Activated CD4-positive, alpha-beta T cell treated with anti-CD3 and anti-CD28 coated beads, Interleukin-2, amount 10 ng/mL, durations not matched to agents 24 days and 14 days (primary cell): ENCODE measurements at regions of chr7 and their contacts with region 1.

Region 1: DNA sequence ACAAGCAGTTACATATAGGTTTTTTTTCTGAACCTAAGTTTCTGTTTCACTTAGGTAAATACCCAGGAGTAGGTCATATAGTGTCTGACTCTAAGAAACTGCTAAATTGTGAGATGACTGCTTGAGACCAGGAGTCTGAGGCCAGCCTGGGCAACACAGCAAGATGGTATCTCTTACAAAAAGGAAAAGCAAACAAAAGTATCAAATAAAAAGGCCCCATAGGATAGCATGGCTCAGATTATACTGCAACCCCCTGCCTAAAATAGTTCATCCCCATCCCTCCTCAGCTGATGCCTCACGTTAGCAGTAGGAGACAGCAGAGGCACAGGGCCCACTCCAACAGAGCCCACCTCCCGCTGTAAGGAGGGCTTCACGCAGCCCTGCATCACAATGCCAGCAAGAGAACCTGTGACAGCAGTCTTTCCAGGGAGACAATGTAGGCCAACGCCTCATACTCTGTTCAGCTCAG is 90.2 kb downstream of the SRPK2 start:
- DNase-seq: peak; percentile 76
- H3K4me3 Mint-ChIP-seq: peak overlapping the region; percentile 50
- H3K27ac Mint-ChIP-seq: peak overlapping the region; percentile 72
- H3K4me1 Mint-ChIP-seq: peaks cover 38% of the 10 kb centered on the region
- H3K27me3 Mint-ChIP-seq: no peaks in the 10 kb centered on the region

Region 2: GRCh38 chr7:104956753-104957450 is 341.6 kb before region 1 on chr7:
- intact Hi-C with region 1: loop called (anchors 2 kb)
- DNase-seq: peak; percentile 88
- H3K4me3 Mint-ChIP-seq: peak overlapping the region; percentile 72
- H3K27ac Mint-ChIP-seq: peak overlapping the region; percentile 100
- H3K4me1 Mint-ChIP-seq: peaks cover 50% of the 10 kb centered on the region
- H3K27me3 Mint-ChIP-seq: no peaks in the 10 kb centered on the region

Region 3: DNA sequence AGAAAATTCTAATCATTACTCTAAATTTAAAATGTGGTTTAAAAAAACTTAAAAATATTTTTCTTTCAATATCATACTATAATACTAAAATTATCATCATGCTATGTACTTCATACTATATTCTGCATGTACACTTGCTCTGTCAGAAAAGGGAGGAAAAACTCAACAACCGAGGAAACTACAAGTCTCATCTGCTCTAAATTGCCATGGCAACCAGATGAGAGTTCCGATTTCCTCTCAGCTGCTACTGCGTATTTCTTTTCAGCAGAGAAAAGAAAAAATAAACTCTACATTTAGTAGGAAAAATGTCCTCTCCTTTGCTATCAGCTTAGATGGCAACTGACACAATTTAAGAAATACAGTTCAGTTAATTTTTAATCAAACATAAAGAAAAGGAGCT is 88.6 kb before region 1 on chr7:
- intact Hi-C with region 1: loop called (anchors 5 kb)
- DNase-seq: peak; percentile 68
- H3K4me3 Mint-ChIP-seq: no peak overlapping the region
- H3K27ac Mint-ChIP-seq: no peak overlapping the region
- H3K4me1 Mint-ChIP-seq: peaks cover 49% of the 10 kb centered on the region
- H3K27me3 Mint-ChIP-seq: no peaks in the 10 kb centered on the region

Region 4: DNA sequence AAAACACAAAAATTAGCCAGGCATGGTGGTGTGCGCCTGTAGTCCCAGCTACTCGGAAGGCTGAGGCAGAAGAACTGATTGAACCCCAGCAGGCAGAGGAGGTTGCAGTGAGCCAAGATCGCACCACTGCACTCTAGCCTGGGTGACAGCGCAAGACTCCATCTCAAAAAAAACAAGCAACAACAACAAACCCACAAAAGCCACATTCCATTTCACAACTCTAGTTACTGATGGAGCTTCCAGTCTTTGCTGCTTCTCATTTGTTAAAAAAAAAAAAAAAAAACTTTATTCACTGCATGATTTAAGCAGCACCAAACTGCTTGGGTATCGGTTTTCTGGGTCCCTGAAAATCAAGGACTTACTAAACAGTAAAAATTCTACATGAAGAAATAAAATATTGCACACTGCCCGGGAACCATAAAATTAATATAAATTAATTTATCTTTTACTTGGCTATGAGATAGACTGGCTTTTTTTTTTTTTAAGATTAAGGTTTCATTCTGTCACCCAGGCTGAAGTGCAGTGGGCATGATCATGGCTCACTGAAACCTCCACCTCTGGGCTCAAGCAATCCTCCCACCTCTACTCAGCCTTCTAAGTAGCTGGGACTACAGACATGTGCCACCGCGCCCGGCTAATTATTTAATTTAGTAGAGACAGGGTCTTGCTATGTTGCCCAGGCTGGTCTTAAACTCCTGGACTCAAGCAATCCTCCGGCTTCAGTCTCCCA is 48.3 kb after region 1 on chr7:
- intact Hi-C with region 1: loop called (anchors 1 kb)
- DNase-seq: peak; percentile 81
- H3K4me3 Mint-ChIP-seq: peak overlapping the region; percentile 56
- H3K27ac Mint-ChIP-seq: peak overlapping the region; percentile 60
- H3K4me1 Mint-ChIP-seq: peaks cover 42% of the 10 kb centered on the region
- H3K27me3 Mint-ChIP-seq: no peaks in the 10 kb centered on the region

Region 5: DNA sequence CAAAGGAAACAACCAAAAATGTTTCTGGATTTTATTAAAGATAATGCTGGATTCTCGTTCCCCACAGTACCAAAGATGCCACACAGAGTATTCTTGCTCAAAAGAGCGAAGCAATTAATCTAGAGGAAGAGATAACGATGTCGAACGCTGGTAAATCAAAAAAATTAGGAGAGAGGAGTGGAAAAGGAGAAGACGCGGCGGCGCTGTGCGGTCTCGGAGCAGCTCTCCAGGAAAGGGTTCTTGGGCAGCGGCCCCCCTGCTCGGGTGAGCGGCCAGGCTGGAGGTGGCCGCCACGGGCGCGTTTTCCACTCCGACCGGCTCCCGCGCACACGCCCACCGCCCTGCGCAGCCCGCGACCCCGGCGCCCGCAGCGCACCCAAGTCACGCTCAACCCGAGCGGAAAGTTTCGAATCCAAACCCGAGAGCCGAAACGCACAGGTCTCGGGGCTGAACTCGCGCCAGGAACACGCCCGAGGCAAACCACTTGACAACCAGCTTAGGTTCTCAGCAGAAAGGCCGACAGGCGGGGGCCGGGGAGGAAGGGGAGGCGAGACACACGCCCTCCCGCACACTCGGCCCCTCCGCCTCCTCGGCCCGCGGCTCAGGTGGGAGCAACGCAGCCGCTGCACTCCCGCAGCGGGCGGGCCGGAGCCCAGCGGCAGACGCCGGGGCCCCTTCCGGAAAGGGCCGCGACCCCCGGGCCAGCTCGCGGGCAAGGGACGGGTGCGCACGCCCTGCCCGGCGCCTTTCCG is 89.3 kb after region 1 on chr7:
- intact Hi-C with region 1: loop called (anchors 5 kb)
- DNase-seq: peak; percentile 87
- H3K4me3 Mint-ChIP-seq: peak overlapping the region; percentile 92
- H3K27ac Mint-ChIP-seq: peak overlapping the region; percentile 72
- H3K4me1 Mint-ChIP-seq: peaks cover 23% of the 10 kb centered on the region
- H3K27me3 Mint-ChIP-seq: peaks cover 2% of the 10 kb centered on the region